Activated CD4-positive, alpha-beta memory T cell treated with anti-CD3 and anti-CD28 coated beads for 36 hours (primary cell): ENCODE measurements at regions of chr17 and their contacts with region 1.

Region 1: GRCh38 chr17:76014184-76014924 is 12.8 kb downstream of the EVPL start:
- DNase-seq: peak; percentile 85
- H3K4me3 Mint-ChIP-seq: no peak overlapping the region
- H3K27ac Mint-ChIP-seq: peak overlapping the region; percentile 15
- H3K4me1 Mint-ChIP-seq: peaks cover 5% of the 10 kb centered on the region
- H3K27me3 Mint-ChIP-seq: no peaks in the 10 kb centered on the region

Region 2: DNA sequence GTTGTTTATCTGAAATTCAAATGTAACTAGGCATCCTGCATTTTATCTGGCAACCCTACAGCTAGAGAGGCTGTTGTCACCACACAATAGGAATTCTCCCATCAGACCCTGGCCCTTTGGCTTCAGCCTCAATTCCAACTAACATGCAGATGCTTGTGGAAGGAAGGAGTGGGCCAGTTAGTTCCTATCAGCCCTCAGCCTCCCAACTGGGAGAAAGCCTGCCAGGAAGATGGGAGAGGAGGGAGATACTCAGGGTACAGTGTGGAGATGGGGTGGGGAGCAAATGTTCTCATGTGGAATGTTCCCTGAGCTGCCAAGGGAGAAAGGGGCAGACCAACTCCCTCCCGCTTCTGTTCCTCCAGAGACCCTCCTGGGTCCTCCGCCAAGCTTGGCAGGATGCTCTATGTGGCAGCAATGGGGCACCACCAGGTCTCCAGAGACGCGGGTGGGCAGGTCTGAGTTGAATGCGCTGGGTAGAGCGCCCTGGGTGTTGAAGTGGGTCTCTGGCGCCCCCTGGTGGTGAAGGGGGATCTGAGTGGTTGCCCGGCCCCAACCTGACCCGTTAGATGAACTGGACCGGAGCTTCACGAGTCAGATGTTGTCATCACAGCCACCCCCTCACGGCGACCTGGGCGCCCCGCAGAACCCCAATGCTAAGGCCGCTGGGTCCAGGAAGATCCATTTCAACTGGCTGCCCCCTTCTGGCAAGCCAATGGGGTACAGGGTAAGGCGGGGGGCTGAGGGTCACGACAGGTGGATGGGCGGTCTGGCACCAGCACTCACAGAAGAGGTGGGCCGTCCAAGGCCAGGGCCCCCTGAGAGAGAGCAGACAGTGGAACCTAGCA is 264.6 kb before region 1 on chr17:
- CTCF ChIA-PET with region 1: no interaction called
- POLR2A ChIA-PET with region 1: no interaction called
- intact Hi-C with region 1: no loop called
- DNase-seq: peak; percentile 91
- H3K4me3 Mint-ChIP-seq: peak overlapping the region; percentile 37
- H3K27ac Mint-ChIP-seq: no peak overlapping the region
- H3K4me1 Mint-ChIP-seq: peaks cover 21% of the 10 kb centered on the region
- H3K27me3 Mint-ChIP-seq: no peaks in the 10 kb centered on the region

Region 3: DNA sequence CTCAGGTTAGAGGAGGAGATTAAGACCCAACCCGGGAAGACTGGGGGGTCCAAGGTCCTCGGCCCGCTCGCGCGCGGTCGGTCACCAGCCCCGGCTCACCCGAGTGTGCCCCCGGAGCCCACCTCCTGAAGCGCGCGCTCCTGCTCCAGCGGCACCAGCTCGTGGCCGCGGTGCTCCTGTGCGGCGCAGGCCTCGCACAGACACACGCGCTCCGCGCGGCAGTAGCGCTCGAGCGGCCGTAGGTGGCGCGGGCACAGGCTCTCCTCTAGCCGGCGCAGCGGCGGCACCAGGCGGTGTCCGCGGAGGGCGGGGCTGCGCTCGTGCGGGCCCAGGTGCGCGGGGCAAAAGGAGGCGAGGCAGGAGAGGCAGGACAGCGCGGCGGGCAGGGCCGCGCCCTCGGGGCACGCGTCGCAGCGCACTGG is 136.6 kb before region 1 on chr17:
- CTCF ChIA-PET with region 1: no interaction called
- POLR2A ChIA-PET with region 1: no interaction called
- intact Hi-C with region 1: no loop called
- DNase-seq: peak; percentile 81
- H3K4me3 Mint-ChIP-seq: peak overlapping the region; percentile 89
- H3K27ac Mint-ChIP-seq: peak overlapping the region; percentile 92
- H3K4me1 Mint-ChIP-seq: peaks cover 33% of the 10 kb centered on the region
- H3K27me3 Mint-ChIP-seq: no peaks in the 10 kb centered on the region

Region 4: DNA sequence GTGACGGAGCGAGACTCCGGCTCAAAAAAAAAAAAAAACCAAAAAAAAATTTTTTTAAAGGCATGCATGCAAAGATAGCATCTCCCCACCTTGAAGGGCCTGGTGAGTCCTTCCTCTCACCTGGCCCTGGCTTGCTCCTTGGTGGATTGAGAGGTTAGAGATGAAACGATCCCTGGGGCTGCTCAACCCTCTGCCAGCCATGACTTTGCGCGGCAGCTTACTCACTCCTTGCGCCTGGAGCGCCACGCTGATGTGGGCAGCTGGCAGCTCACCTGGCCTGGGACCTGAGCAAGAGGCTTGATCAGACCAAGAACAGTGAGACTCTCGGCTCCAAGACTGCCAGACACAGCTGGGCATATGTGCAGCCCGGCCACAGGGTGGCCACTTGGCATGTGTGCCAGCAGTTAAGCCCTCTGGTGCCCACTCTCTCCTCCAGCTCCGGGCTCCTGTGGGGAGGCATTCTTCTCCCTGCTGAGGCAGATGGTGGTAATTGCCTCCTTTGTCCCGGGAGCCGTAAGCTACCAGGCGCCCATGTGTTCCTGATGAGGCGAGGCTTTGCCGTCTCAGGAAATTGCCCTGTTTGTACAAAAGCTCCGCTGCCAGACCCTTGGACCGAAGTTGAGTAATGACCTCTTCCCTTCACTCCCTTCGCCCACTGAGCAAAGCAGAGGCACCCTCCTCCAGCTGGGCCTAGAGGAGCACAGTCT is 17.9 kb after region 1 on chr17:
- CTCF ChIA-PET with region 1: interaction called, 15 read pairs
- POLR2A ChIA-PET with region 1: no interaction called
- intact Hi-C with region 1: no loop called
- DNase-seq: no peak
- H3K4me3 Mint-ChIP-seq: no peak overlapping the region
- H3K27ac Mint-ChIP-seq: no peak overlapping the region
- H3K4me1 Mint-ChIP-seq: peaks cover 10% of the 10 kb centered on the region
- H3K27me3 Mint-ChIP-seq: no peaks in the 10 kb centered on the region

Region 5: DNA sequence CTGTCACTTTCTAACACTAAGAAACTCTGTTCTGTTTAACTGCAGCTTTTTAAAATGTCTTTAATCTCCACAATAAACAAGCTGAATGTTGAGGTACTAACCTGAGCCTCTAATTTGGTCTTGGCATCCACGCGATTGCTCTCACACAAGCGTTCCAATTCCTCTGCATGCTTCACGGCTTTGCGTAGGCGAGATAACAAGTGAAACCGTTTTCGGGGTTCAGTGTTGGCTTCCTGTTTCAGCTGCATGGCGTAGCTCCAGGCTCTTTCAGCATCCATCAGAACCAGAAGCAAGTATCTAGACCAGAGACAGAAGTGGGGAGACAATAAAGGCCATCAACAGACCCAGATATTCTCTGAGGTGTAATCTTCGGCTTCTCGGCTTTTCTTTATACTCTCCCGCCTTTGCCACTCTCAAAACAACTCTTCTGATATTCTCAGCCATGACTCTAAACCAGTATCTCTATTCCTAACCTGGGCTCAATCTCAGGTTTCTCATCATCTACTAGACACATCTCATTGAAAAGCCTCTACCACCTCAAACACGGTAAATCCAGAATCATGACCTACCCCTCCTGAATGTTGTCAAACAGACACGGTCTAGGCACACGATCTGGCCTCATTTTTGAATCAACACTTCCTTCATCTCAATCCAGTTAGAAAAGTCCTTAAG is 49.7 kb after region 1 on chr17:
- CTCF ChIA-PET with region 1: interaction called, 21 read pairs
- POLR2A ChIA-PET with region 1: no interaction called
- intact Hi-C with region 1: no loop called
- DNase-seq: peak; percentile 80
- H3K4me3 Mint-ChIP-seq: peak overlapping the region; percentile 25
- H3K27ac Mint-ChIP-seq: peak overlapping the region; percentile 84
- H3K4me1 Mint-ChIP-seq: peaks cover 31% of the 10 kb centered on the region
- H3K27me3 Mint-ChIP-seq: no peaks in the 10 kb centered on the region

Region 6: GRCh38 chr17:76103274-76104139 is 89.2 kb after region 1 on chr17 and contains the start of gene EXOC7:
- CTCF ChIA-PET with region 1: interaction called, 35 read pairs
- POLR2A ChIA-PET with region 1: no interaction called
- intact Hi-C with region 1: loop called (anchors 2 kb)
- DNase-seq: peak; percentile 95
- H3K4me3 Mint-ChIP-seq: peak within 1 kb of the TSS; percentile 98
- H3K27ac Mint-ChIP-seq: peak within 1 kb of the TSS; percentile 92
- H3K4me1 Mint-ChIP-seq: peaks cover 24% of the 10 kb centered on the region
- H3K27me3 Mint-ChIP-seq: no peaks in the 10 kb centered on the region
- total RNA-seq, gene EXOC7: 63.3 to 66.0 TPM

Region 7: DNA sequence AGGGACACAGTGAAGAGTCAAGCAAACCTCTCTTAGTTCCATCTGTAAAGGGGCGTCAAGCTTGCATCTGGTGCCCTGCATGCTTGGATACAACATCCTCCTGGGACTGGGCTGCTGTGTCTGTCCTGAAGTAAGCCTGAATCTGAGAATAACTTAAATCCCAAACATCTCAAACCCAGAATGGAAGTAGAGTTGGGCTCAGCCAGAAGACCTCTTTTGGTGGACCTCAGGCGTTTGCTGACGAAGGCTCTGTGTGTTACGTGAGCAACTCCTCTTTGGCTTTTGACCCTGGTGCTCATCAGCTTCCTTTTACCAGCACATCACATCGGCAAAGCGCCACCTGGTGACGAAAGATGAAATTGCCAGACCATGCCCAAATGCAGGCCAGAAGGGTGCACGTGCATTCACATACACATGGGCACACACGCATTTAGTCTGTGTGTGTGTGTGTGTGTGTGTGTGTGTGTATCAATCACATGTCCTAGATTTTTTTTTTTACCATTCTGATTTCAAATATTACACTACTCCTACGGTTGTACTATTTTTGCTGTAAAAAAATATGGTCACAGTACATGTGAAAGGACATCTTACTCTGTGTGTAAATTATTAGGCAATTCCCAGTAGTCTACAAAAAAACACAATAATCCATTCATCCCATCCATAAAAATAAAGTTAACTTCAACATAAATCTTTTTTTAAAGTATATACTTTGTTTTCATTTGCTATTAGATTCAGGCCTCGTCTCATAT is 167.8 kb after region 1 on chr17:
- CTCF ChIA-PET with region 1: interaction called, 11 read pairs
- POLR2A ChIA-PET with region 1: no interaction called
- intact Hi-C with region 1: no loop called
- DNase-seq: peak; percentile 98
- H3K4me3 Mint-ChIP-seq: peak overlapping the region; percentile 62
- H3K27ac Mint-ChIP-seq: peak overlapping the region; percentile 87
- H3K4me1 Mint-ChIP-seq: peaks cover 56% of the 10 kb centered on the region
- H3K27me3 Mint-ChIP-seq: no peaks in the 10 kb centered on the region